Calu3 (cell line): ENCODE measurements at regions of chr15 and their contacts with region 1.

Region 1: DNA sequence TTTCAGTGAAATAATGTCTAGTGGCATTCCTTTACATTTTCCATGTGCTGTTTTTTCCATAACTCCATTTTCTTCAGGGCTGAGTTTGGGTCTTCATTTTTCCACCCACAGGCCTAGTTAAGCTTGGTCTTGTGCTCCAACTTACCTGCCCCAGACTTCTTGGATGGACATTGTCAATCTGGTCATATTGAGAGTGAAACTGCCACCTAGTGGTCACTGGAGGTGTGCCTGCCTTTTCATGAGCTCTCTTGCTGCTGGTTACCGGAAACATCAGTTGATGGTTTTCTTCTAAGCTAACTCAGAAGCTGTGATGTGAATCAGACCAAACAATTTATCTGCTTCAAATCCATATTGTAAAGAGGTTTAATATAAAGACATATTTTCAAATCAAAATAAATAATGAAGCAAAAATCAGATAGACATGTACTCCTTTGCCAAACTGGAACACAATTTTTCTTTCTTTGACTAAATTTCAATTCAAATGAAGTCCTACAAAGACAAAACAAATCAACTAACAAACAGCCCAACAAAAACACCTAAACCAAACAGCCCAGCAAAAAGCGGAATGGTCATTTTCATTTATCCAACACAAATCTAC is 135.1 kb upstream of the RASGRP1 start:
- DNase-seq: peak; percentile 63
- H3K4me3 Mint-ChIP-seq: no peak overlapping the region
- H3K27ac Mint-ChIP-seq: no peak overlapping the region
- H3K4me1 Mint-ChIP-seq: no peaks in the 10 kb centered on the region
- H3K27me3 Mint-ChIP-seq: no peaks in the 10 kb centered on the region
- CTCF ChIP-seq: no peak

Region 2: DNA sequence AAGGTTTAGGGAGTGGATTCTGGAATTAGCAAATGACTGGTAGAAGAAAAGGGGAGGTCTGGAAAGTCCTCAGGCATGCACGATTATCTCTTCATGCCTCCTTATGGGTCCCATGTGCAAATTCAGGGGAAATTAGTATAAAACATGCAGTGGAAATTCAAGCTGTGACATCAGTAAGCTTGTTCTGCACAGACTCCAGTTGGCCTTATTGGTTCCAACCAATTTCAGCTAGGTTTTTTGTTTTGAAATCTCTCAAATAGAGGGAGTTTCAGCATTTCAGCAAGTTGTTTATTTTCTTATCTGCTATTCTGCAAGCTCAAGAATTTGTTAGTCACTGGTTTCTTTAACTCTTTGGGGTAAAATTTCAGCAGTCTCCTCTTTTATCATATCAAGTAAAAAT is 766.1 kb before region 1 on chr15:
- CTCF ChIA-PET with region 1: no interaction called
- intact Hi-C with region 1: no loop called
- DNase-seq: no peak
- H3K4me3 Mint-ChIP-seq: no peak overlapping the region
- H3K27ac Mint-ChIP-seq: no peak overlapping the region
- H3K4me1 Mint-ChIP-seq: peaks cover 9% of the 10 kb centered on the region
- H3K27me3 Mint-ChIP-seq: no peaks in the 10 kb centered on the region
- CTCF ChIP-seq: no peak

Region 3: DNA sequence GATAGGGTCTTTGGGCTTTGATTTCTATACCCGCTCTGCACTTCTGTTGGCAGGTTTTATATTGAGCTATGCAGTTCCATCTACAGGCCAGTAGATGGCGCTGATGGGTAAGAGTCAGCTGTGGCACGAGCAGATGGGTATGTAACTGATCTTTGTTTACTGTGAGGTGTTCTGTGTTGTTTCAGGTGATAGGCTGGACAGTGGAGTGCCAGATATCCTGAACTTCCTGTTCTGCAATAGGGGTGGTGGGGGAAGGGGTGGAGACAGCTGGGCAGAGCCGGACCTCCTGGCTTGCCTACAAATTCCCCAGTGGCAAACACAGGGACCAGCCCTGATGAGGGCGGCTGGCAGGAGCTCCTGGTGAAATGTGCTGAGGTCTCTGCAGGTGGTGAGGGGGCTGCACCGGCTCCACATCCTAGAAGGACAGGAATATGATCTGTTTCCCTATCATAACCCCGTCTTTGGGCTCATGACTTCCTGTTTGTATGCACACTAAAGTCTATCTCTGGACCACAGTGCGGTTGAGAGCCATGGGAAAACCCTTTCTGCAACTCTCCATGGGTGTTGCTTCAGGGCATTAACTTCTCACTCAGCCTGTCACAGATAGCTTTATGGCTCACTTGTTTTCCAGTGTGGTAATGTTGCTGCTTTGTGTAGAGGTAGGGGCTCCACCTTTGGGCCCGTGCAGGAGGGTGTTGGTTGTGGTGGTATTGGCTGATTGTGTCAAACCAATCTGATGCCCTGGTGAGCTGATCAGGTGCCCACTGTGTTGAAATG is 259.2 kb before region 1 on chr15:
- CTCF ChIA-PET with region 1: interaction called, 16 read pairs
- intact Hi-C with region 1: no loop called
- DNase-seq: peak; percentile 41
- H3K4me3 Mint-ChIP-seq: no peak overlapping the region
- H3K27ac Mint-ChIP-seq: no peak overlapping the region
- H3K4me1 Mint-ChIP-seq: no peaks in the 10 kb centered on the region
- H3K27me3 Mint-ChIP-seq: no peaks in the 10 kb centered on the region
- CTCF ChIP-seq: peak; percentile 45

Region 4: DNA sequence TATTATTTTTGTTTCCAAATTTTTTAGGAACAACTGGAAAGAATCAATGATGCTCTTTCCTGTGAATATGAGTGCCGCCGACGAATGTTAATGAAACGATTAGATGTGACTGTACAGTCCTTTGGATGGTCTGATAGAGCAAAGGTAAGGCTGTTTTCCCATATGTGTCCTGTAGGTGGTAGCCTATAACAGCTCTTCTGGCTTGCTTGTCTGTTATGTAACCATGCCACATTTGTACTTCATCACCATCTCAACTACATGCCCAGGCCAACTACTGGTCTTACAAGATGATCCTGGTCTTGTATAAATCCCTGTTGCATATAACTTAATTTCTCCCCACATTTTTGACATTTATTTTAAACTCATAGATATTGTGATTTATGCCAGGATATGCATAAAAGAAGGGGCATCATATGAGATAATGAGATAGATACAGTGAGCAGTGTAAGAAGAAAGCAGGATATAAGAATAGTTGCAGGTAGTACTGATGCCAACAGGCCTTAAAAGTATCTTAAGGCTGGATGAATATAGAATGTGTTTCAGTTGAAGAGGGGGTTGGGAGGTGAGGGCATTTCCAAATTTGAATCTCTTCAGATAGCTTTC is 225.5 kb before region 1 on chr15:
- CTCF ChIA-PET with region 1: interaction called, 5 read pairs
- intact Hi-C with region 1: loop called (anchors 5 kb)
- DNase-seq: peak; percentile 13
- H3K4me3 Mint-ChIP-seq: no peak overlapping the region
- H3K27ac Mint-ChIP-seq: no peak overlapping the region
- H3K4me1 Mint-ChIP-seq: no peaks in the 10 kb centered on the region
- H3K27me3 Mint-ChIP-seq: no peaks in the 10 kb centered on the region
- CTCF ChIP-seq: peak; percentile 21

Region 5: DNA sequence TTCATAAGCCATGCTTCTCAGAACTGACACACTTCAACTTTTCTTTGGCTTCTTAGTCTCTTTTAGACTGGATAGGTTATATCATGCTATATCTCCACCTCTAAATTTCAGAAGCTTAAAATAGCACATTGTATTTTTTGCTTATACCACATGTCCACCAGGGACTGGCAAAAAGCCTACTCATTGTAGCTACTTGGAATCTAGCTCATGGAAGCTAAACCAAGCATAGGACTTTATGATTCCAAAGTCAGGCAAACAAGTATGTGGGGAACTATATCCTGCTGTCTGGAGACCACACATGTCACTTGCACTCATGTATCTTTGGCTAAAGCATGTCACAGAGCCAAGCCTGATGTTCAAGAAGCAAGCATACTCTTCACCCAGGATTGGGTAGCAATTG is 109.9 kb after region 1 on chr15:
- CTCF ChIA-PET with region 1: no interaction called
- intact Hi-C with region 1: loop called (anchors 10 kb)
- DNase-seq: no peak
- H3K4me3 Mint-ChIP-seq: no peak overlapping the region
- H3K27ac Mint-ChIP-seq: no peak overlapping the region
- H3K4me1 Mint-ChIP-seq: no peaks in the 10 kb centered on the region
- H3K27me3 Mint-ChIP-seq: no peaks in the 10 kb centered on the region
- CTCF ChIP-seq: no peak